Spleen (tissue), 13 donors: ENCODE measurements at regions of chr18 and their contacts with region 1.

Region 1: GRCh38 chr18:13216092-13216582 is 2.4 kb upstream of the LDLRAD4 start:
- DNase-seq: no peak
- H3K4me3 ChIP-seq: peak overlapping the region in 3 of 8 donors; percentile 7 to 94 (median 77)
- H3K27ac ChIP-seq: peak overlapping the region in 4 of 8 donors; percentile 42 to 83 (median 80)
- H3K4me1 ChIP-seq: peaks cover 14 to 51% (median 41%) of the 10 kb centered on the region in 6 donors
- H3K27me3 ChIP-seq: peaks cover 0 to 85% (median 11%) of the 10 kb centered on the region in 7 donors
- CTCF ChIP-seq: peak; percentile 49 to 86 (median 68)
- POLR2A ChIP-seq: no peak

Region 2: DNA sequence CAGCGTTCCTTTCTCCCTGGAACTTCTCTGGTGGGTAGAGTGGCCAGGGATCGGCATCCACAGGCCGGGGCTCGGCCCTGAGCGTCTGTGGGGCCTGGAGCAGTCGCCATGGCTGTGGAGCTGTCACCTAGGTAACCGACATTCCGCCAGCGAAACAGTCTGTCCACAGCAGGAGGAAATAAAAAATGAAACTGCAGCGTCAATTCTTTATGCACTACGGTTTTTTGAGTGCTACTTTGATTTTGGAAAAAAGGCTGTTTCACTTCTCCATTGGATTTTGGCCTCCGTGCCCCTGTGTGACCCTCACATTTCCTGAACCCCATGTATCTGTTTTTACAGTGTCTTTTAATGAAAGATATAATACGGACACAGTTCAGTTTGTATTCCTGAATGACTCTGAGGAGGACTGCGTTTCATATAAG is 165.8 kb after region 1 on chr18:
- intact Hi-C with region 1: loop called (anchors 5 kb)
- DNase-seq: no peak
- H3K4me3 ChIP-seq: peak overlapping the region in 7 of 8 donors; percentile 15 to 60 (median 21)
- H3K27ac ChIP-seq: peak overlapping the region; percentile 6 to 90 (median 80)
- H3K4me1 ChIP-seq: peaks cover 15 to 64% (median 30%) of the 10 kb centered on the region in 6 donors
- H3K27me3 ChIP-seq: no peaks in the 10 kb centered on the region
- CTCF ChIP-seq: no peak
- POLR2A ChIP-seq: no peak

Region 3: GRCh38 chr18:13464432-13465123 is 248.4 kb after region 1 on chr18:
- intact Hi-C with region 1: loop called (anchors 10 kb)
- DNase-seq: peak; percentile 92
- H3K4me3 ChIP-seq: peak overlapping the region; percentile 6 to 76 (median 45)
- H3K27ac ChIP-seq: peak overlapping the region; percentile 57 to 88 (median 80)
- H3K4me1 ChIP-seq: peaks cover 20 to 53% (median 38%) of the 10 kb centered on the region in 6 donors
- H3K27me3 ChIP-seq: no peaks in the 10 kb centered on the region
- CTCF ChIP-seq: peak in 4 of 11 experiments; percentile 4 to 20 (median 10)
- POLR2A ChIP-seq: no peak

Region 4: GRCh38 chr18:13530879-13531387 is 314.8 kb after region 1 on chr18:
- intact Hi-C with region 1: loop called (anchors 5 kb)
- DNase-seq: no peak
- H3K4me3 ChIP-seq: no peak overlapping the region
- H3K27ac ChIP-seq: no peak overlapping the region
- H3K4me1 ChIP-seq: peaks cover 0 to 19% (median 2%) of the 10 kb centered on the region in 6 donors
- H3K27me3 ChIP-seq: no peaks in the 10 kb centered on the region
- CTCF ChIP-seq: peak in 8 of 11 experiments; percentile 21 to 62 (median 45)
- POLR2A ChIP-seq: no peak

Region 5: GRCh38 chr18:13629841-13630715 is 413.9 kb after region 1 on chr18:
- intact Hi-C with region 1: loop called (anchors 10 kb)
- DNase-seq: no peak
- H3K4me3 ChIP-seq: no peak overlapping the region
- H3K27ac ChIP-seq: no peak overlapping the region
- H3K4me1 ChIP-seq: peaks cover 0 to 24% (median 9%) of the 10 kb centered on the region in 6 donors
- H3K27me3 ChIP-seq: no peaks in the 10 kb centered on the region
- CTCF ChIP-seq: peak; percentile 52 to 93 (median 72)
- POLR2A ChIP-seq: no peak

Region 6: GRCh38 chr18:13726232-13726971 is 510.3 kb after region 1 on chr18 and contains the starts of genes FAM210A and RNMT:
- intact Hi-C with region 1: loop called (anchors 5 kb)
- DNase-seq: peak; percentile 99
- H3K4me3 ChIP-seq: peak within 1 kb of the TSS; percentile 75 to 99 (median 95)
- H3K27ac ChIP-seq: peak within 1 kb of the TSS; percentile 86 to 94 (median 92)
- H3K4me1 ChIP-seq: peaks cover 18 to 68% (median 45%) of the 10 kb centered on the region in 6 donors
- H3K27me3 ChIP-seq: no peaks in the 10 kb centered on the region
- CTCF ChIP-seq: peak in 3 of 11 experiments; percentile 6 to 31 (median 27)
- POLR2A ChIP-seq: peak in 2 of 3 donors; percentile 20 to 29
- total RNA-seq, gene FAM210A: 5.9 to 16.2 (median 10.5) TPM
- total RNA-seq, gene RNMT: 17.5 to 33.3 (median 28.0) TPM

Region 7: GRCh38 chr18:13932285-13933025 is 716.3 kb after region 1 on chr18:
- intact Hi-C with region 1: no loop called
- DNase-seq: no peak
- H3K4me3 ChIP-seq: no peak overlapping the region
- H3K27ac ChIP-seq: no peak overlapping the region
- H3K4me1 ChIP-seq: no peaks in the 10 kb centered on the region
- H3K27me3 ChIP-seq: no peaks in the 10 kb centered on the region
- CTCF ChIP-seq: no peak
- POLR2A ChIP-seq: no peak